ENCODE measurements at regions of chr10 and their contacts with region 1.

Region 1: GRCh38 chr10:30722956-30723620 is 93.5 kb upstream of the LYZL2 start:
- DNase-seq: no peak
- ATAC-seq: no peak
- H3K4me3 Mint-ChIP-seq: no peak overlapping the region
- H3K27ac Mint-ChIP-seq: no peak overlapping the region
- H3K4me1 Mint-ChIP-seq: peaks cover 37% of the 10 kb centered on the region
- H3K27me3 Mint-ChIP-seq: no peaks in the 10 kb centered on the region

Region 2: DNA sequence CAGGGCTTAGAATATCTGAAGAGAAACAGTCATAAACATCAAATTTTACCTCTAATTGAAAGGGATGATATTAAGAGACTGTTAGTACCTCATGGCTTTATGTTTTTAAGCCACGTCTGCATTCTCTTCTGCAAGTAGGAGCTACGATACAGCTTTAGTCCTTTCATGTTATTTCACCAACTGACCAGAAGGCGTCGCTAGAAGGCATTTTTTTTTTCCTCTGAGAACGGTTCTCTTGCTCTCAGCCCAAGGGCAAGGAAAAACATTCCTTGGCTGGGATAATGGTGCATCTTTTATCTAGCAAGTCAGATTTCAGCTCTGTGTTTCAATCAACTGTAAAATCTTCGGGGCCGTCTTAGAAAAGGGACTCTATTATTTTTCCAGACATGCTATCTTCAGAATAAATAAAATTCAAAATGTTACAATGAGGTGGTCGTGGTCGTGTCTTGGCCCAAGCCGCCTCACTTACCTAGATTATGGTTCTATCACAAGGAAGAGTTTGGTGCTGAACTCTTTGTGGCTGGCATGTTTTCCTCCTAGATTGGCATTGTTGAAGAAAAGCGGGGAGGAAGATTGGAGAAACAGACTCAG is 52.0 kb before region 1 on chr10:
- CTCF ChIA-PET with region 1: interaction called, 24 read pairs
- DNase-seq: no peak
- ATAC-seq: peak; percentile 76
- H3K4me3 Mint-ChIP-seq: peak overlapping the region; percentile 58
- H3K27ac Mint-ChIP-seq: no peak overlapping the region
- H3K4me1 Mint-ChIP-seq: peaks cover 26% of the 10 kb centered on the region
- H3K27me3 Mint-ChIP-seq: peaks cover 9% of the 10 kb centered on the region

Region 3: GRCh38 chr10:30687698-30688219 is 35.3 kb before region 1 on chr10:
- CTCF ChIA-PET with region 1: interaction called, 45 read pairs
- DNase-seq: peak; percentile 88
- ATAC-seq: peak; percentile 78
- H3K4me3 Mint-ChIP-seq: no peak overlapping the region
- H3K27ac Mint-ChIP-seq: peak overlapping the region; percentile 69
- H3K4me1 Mint-ChIP-seq: peaks cover 63% of the 10 kb centered on the region
- H3K27me3 Mint-ChIP-seq: no peaks in the 10 kb centered on the region

Region 4: GRCh38 chr10:30694518-30695228 is 28.4 kb before region 1 on chr10:
- CTCF ChIA-PET with region 1: interaction called, 14 read pairs
- DNase-seq: no peak
- ATAC-seq: no peak
- H3K4me3 Mint-ChIP-seq: no peak overlapping the region
- H3K27ac Mint-ChIP-seq: peak overlapping the region; percentile 88
- H3K4me1 Mint-ChIP-seq: peaks cover 63% of the 10 kb centered on the region
- H3K27me3 Mint-ChIP-seq: no peaks in the 10 kb centered on the region

Region 5: GRCh38 chr10:30701451-30702173 is 21.5 kb before region 1 on chr10:
- CTCF ChIA-PET with region 1: interaction called, 33 read pairs
- DNase-seq: peak; percentile 93
- ATAC-seq: peak; percentile 72
- H3K4me3 Mint-ChIP-seq: peak overlapping the region; percentile 84
- H3K27ac Mint-ChIP-seq: peak overlapping the region; percentile 99
- H3K4me1 Mint-ChIP-seq: peaks cover 82% of the 10 kb centered on the region
- H3K27me3 Mint-ChIP-seq: no peaks in the 10 kb centered on the region

Region 6: DNA sequence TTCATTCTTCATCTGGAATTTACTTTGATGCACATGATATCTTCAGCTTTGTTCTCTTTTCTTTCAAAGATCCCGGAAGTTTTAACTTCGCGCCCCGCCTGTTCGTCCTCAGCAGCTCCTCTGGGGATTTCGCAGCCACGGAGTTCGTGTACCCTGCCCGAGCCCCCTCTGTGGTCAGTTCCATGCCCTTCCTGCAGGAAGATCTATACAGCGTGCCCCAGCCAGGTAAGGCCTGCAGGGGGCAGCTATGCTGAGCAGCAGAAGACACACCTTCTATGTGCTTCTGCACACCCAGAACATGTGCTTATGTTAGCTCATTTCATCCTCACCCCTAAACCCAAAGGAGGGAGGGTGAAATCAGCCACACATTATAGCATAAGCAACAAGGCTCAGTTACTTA is 13.9 kb before region 1 on chr10:
- CTCF ChIA-PET with region 1: interaction called, 33 read pairs
- DNase-seq: no peak
- ATAC-seq: no peak
- H3K4me3 Mint-ChIP-seq: no peak overlapping the region
- H3K27ac Mint-ChIP-seq: no peak overlapping the region
- H3K4me1 Mint-ChIP-seq: peaks cover 29% of the 10 kb centered on the region
- H3K27me3 Mint-ChIP-seq: no peaks in the 10 kb centered on the region